AG04450 (cell line): ENCODE measurements at regions of chr11 and their contacts with region 1.

Region 1: DNA sequence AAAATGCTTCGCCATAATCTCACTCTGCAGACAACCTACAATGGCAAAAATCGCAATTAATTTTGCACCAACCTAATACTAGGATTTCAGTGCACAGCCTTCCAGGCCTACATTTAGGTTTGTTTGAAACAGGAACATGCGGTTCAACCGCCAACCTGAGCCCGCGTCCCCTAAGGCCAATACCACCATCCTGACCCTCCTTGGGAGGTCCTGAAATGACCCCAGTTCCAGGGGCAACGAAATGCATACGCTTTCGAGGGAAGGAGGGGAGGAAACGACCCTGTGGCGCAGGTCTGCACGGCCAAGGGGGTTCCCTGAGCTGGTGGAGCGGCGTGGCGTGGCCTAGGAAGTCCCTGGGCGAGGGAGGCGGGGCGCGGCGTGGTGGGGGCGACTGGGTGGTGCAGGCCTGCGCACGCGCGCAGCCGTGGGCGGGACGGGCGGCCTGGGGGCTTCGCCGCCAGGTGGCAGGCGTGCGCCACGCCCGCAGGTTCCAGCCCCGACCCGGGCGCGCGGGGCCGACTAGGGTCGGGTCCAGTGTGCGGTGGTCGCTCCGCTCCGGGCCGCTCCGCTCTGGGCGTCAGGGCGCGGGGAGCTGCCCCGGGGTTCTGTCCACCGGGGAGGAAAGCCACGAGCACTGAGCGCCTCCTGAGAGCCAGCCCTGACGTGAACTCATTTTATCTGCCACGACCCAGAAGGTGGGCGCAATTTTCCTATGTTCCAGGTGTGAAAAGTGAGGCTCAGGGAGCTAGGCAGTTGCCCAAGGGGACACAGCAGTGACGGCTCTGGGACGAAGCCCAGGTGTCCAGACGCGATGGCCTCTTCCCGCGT is 94.1 kb downstream of the SWAP70 start:
- DNase-seq: no peak
- H3K4me3 ChIP-seq: peak overlapping the region; percentile 45
- H3K27ac ChIP-seq: peak overlapping the region; percentile 95
- H3K27me3 ChIP-seq: no peaks in the 10 kb centered on the region
- CTCF ChIP-seq: peak; percentile 51

Region 2: DNA sequence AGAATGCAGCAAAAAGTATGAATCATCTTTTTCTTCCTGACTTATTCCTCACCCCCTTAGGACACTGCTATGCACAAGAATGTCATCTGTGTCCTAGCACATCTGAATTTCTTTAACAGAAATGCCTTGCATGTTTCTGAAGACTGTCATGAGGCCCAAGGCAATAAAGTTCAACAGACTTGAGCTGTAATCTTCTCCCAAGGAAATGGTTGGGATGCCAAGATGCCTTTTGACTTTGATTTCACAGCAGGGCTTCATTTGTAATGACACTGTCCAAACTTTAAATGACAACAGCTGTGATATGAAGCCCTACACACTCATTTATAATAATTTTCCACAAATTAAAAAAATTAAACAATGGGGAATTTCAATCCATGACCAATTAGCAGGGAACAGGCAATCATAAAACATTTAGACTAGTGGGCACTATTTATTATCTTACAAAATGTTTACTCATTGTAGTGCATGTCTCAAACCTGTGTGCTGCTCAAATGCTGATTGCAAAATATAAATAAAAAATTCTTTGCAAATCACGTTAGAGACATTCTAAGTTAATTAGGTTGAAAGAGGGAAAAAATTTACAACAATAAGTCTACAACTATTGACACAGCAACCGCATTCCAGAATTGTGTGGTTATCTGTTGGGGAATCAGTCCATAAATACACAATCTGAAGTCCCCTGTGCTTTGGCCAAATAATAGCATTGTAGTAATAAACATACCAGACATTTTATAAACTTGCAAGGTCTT is 148.2 kb after region 1 on chr11:
- CTCF ChIA-PET with region 1: no interaction called
- POLR2A ChIA-PET with region 1: interaction called, 19 read pairs
- DNase-seq: peak; percentile 79
- H3K4me3 ChIP-seq: no peak overlapping the region
- H3K27ac ChIP-seq: no peak overlapping the region
- H3K27me3 ChIP-seq: no peaks in the 10 kb centered on the region
- CTCF ChIP-seq: no peak

Region 3: DNA sequence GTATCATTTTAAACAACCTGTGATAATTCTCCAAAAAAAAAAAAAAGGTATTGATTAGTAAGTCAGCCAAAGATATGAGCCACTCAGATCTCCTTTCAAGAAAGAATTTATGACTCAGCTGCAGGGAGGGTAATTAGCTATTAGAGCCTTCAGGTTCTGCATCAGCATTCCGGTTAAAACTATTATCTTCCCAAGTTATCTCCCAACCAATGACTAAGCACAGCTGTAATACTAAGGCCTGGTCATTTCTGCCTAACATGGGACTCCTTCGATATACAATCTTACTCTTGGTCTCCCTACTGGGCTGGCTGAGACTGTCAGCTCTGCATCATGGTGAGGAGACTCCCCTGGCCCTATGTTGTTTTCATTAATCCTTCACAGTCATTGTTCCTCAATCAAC is 475.6 kb after region 1 on chr11:
- CTCF ChIA-PET with region 1: no interaction called
- POLR2A ChIA-PET with region 1: no interaction called
- DNase-seq: peak; percentile 61
- H3K4me3 ChIP-seq: no peak overlapping the region
- H3K27ac ChIP-seq: peak overlapping the region; percentile 62
- H3K27me3 ChIP-seq: no peaks in the 10 kb centered on the region
- CTCF ChIP-seq: no peak